ENCODE measurements at regions of chr15 and their contacts with region 1.

Region 1: GRCh38 chr15:60585743-60586708 is 107.1 kb upstream of the ICE2 start:
- DNase-seq: no peak
- ATAC-seq: peak; percentile 77
- H3K4me3 Mint-ChIP-seq: no peak overlapping the region
- H3K27ac Mint-ChIP-seq: peak overlapping the region; percentile 32
- H3K4me1 Mint-ChIP-seq: peaks cover 30% of the 10 kb centered on the region
- H3K27me3 Mint-ChIP-seq: peaks cover 27% of the 10 kb centered on the region
- CTCF ChIP-seq: peak; percentile 79

Region 2: GRCh38 chr15:60507596-60508424 is 78.2 kb before region 1 on chr15:
- CTCF ChIA-PET with region 1: interaction called, 9 read pairs
- POLR2A ChIA-PET with region 1: no interaction called
- intact Hi-C with region 1: loop called (anchors 2 kb)
- DNase-seq: no peak
- ATAC-seq: peak; percentile 99
- H3K4me3 Mint-ChIP-seq: peak overlapping the region; percentile 24
- H3K27ac Mint-ChIP-seq: peak overlapping the region; percentile 2
- H3K4me1 Mint-ChIP-seq: peaks cover 11% of the 10 kb centered on the region
- H3K27me3 Mint-ChIP-seq: no peaks in the 10 kb centered on the region
- CTCF ChIP-seq: peak; percentile 55

Region 3: GRCh38 chr15:60573936-60574335 is 12.1 kb before region 1 on chr15:
- CTCF ChIA-PET with region 1: interaction called, 21 read pairs
- POLR2A ChIA-PET with region 1: interaction called, 5 read pairs
- intact Hi-C with region 1: loop called (anchors 2 kb)
- DNase-seq: no peak
- ATAC-seq: peak; percentile 87
- H3K4me3 Mint-ChIP-seq: peak overlapping the region; percentile 49
- H3K27ac Mint-ChIP-seq: peak overlapping the region; percentile 78
- H3K4me1 Mint-ChIP-seq: peaks cover 29% of the 10 kb centered on the region
- H3K27me3 Mint-ChIP-seq: no peaks in the 10 kb centered on the region
- CTCF ChIP-seq: no peak

Region 4: DNA sequence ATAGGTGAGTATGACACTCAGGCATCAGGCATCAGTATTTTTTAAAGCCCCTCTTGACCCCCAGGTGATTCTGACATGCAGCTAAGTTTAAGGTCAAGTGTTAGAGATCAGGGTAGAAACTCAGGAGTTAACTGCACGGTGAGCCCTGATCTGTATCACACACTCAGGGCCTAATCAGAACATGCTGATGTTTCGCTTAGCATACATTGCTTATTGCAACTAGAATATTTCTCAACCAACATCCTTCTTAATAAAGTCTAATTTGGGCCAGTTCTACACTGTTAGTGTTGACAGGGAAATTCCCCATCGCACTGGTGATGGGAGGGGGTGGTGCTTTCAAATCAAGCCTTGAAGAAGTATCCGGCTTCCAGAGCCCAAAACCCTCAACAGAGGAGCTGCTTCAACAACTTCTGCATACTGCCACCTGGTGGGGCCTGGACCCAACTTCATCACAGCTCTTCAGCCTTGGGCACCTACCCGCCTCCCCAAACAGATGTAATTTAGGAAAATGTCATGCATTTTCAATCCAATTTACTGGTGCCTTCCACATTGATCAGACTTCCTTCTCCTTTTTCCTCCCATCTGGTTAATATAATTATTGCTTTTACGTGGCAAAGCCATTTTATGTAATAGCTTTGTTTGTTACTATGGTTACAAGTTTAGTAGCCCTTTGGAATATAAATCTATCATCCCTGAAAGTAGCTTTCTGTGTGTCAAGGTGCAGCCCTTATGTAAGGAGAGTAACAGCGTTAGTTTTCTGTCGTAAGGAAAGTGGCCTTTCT is 330.8 kb after region 1 on chr15:
- CTCF ChIA-PET with region 1: interaction called, 127 read pairs
- POLR2A ChIA-PET with region 1: interaction called, 5 read pairs
- intact Hi-C with region 1: loop called (anchors 1 kb)
- DNase-seq: peak; percentile 47
- ATAC-seq: peak; percentile 97
- H3K4me3 Mint-ChIP-seq: peak overlapping the region; percentile 58
- H3K27ac Mint-ChIP-seq: peak overlapping the region; percentile 39
- H3K4me1 Mint-ChIP-seq: peaks cover 15% of the 10 kb centered on the region
- H3K27me3 Mint-ChIP-seq: no peaks in the 10 kb centered on the region
- CTCF ChIP-seq: peak; percentile 42

Region 5: DNA sequence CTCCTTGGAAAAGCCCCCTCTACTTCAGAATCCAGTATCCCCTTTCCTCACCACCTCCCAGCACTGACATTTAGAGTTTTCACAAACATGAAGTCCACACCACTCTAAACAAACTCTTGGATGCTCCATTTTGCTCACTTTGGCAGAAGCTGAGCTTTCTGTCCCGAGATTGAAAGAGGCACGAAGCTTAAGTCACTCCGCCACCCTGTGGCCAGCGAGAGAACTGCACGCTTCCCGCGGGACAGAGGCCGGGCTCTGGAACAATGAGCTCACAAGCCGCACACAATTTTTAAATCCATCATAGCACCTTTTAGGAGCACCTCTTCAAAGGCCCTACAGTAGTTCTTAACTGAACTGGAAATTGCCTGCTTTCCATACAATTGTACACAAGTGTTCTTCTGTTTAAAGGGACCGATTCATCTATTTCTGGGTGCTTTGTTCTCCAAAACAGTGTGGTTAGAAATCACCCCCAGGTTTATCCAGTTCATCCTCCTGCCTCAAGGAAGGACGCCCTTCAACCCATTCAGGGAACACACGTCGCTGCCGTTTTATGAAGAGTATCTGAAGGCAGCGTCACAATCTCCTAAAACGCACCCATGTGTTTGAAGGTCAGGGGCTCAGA is 1248.2 kb after region 1 on chr15:
- CTCF ChIA-PET with region 1: interaction called, 57 read pairs
- POLR2A ChIA-PET with region 1: no interaction called
- intact Hi-C with region 1: loop called (anchors 1 kb)
- DNase-seq: peak; percentile 66
- ATAC-seq: peak; percentile 77
- H3K4me3 Mint-ChIP-seq: no peak overlapping the region
- H3K27ac Mint-ChIP-seq: no peak overlapping the region
- H3K4me1 Mint-ChIP-seq: peaks cover 3% of the 10 kb centered on the region
- H3K27me3 Mint-ChIP-seq: peaks cover 24% of the 10 kb centered on the region
- CTCF ChIP-seq: no peak